ENCODE measurements at regions of chr7 and their contacts with region 1.

Region 1: DNA sequence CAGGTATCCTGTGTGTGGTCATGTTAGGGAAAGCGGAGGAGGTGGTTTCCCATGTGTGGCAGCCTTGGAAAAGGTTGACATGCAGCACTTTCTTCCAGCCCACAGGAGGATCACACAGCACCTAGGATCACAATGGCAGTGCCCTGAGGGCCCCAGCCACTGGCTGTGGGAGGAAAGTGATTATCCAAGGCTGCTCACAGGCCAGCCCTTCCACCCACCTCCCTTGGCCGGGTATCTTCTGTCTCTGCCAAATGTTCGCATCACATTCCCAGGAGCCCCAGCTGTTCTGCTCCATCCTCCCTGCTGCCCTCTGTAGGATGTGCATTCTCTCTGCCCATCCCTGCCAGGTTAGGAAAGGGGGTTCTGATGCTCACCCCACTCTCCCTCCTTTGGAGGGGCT is 2.5 kb upstream of the MLXIPL start:
- DNase-seq: no peak
- H3K4me3 ChIP-seq: no peak overlapping the region
- H3K27me3 ChIP-seq: peaks cover 39% of the 10 kb centered on the region
- CTCF ChIP-seq: peak; percentile 28

Region 2: DNA sequence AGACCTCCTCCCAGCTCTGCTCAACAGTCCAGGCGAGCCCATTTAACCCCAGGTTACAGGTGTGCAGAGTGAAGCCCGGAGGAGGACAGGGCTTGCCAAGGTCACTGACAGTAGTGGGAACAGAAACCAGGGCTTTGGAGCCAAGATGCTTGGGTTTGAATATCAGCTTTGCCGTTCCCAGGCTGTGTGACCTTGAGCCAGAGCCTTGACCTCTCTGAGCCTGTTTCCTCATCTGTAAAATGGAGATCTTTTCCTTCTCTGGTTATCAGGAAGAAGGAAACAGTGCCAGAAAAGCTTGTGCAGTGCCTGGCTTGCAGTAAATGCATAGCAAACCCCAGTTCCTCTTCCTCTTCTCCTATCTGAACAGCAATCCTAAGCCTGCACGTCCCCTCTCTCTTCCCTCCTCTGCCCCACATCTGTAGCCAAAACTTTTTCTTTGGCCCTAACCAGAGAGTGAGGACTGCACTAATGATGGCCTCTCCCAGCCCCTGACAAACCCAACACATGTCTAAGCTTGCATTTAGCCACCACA is 18.9 kb after region 1 on chr7:
- CTCF ChIA-PET with region 1: interaction called, 10 read pairs
- POLR2A ChIA-PET with region 1: no interaction called
- DNase-seq: no peak
- H3K4me3 ChIP-seq: no peak overlapping the region
- H3K27me3 ChIP-seq: peaks cover 36% of the 10 kb centered on the region
- CTCF ChIP-seq: no peak

Region 3: DNA sequence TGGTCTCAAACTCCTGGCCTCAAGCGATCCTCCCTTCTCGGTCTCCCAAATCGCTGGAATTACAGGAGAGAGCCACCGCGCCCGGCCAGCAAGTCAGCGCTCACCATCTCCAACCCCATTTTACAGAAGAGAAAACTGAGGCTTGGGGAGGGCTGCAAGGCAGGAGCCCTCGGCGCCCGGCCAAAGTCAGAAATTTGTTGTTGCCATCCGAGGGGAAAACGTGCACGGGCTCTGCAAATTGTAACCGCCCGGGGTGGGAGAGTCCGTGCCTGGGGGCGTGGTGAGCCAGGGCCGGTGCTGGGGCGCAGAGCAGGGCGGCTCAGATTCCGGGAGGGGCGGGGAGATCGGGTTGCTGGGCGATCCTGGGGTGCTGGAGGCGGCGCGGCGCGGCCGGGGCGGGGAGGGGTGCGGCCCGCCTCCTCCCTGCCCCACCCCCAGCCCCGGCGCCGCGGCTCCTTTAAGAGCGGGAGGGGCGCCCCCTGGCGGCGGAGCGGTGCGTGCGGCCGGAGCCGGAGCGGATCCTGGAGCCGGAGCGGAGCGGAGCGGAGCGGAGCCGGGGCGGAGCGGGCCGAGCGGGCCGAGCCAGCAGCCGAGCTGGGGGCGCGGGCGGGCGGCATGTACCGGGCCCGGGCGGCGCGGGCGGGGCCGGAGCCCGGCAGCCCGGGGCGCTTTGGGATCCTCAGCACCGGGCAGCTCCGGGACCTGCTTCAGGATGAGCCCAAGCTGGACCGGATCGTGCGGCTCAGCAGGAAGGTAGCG is 40.7 kb after region 1 on chr7 and contains the start of gene VPS37D:
- CTCF ChIA-PET with region 1: interaction called, 11 read pairs
- POLR2A ChIA-PET with region 1: no interaction called
- DNase-seq: peak; percentile 23
- H3K4me3 ChIP-seq: peak within 1 kb of the TSS; percentile 77
- H3K27me3 ChIP-seq: no peaks in the 10 kb centered on the region
- CTCF ChIP-seq: peak; percentile 48
- polyA plus RNA-seq, gene VPS37D: 2.2 and 3.3 TPM in 2 replicates

Region 4: DNA sequence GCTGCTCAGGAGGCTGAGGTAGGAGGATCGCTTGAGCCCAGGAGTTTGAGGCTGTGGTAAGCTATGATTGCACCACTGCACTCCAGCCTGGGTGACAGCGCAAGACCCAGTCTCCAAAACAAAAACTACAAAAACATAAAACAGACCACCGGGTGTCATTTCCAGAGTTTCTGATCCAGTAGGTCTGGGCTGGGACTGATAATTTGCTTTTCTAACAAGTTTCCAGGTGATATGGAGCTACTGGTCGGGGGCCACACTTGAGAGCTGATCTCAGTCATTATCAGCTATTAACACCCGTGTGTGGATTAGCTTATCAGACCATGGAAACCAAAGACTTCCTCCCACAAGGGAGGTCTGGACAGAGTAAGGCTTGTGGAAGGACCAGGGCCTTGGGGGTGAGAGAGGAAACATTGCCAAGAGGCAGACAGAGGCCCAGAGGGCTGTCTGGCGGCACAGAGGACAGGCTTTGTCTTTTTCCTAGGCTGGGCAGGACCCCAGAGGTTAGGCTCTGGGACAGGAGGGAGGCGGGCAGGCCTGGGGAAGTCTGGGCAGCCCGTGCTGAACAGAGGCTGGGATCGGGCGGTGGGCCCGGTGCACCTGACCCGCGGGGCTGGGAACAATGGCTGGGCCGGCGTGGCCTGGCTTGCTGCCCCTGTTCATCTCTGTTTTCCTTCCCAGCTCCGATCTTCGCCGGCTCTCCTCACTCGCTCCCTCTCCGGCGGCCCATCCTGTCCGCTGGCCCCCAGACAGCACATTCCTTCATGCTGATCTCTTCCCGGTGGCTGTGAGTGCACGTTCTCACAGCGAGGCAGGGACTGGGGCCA is 259.4 kb after region 1 on chr7:
- CTCF ChIA-PET with region 1: no interaction called
- POLR2A ChIA-PET with region 1: no interaction called
- DNase-seq: no peak
- H3K4me3 ChIP-seq: no peak overlapping the region
- H3K27me3 ChIP-seq: no peaks in the 10 kb centered on the region
- CTCF ChIP-seq: no peak

Measured in BJ (cell line).